Cardiac septum (tissue), 1 donor: ENCODE measurements at regions of chr4 and their contacts with region 1.

Region 1: GRCh38 chr4:159175085-159175988 is 72.5 kb downstream of the RAPGEF2 start:
- DNase-seq: no peak

Region 2: DNA sequence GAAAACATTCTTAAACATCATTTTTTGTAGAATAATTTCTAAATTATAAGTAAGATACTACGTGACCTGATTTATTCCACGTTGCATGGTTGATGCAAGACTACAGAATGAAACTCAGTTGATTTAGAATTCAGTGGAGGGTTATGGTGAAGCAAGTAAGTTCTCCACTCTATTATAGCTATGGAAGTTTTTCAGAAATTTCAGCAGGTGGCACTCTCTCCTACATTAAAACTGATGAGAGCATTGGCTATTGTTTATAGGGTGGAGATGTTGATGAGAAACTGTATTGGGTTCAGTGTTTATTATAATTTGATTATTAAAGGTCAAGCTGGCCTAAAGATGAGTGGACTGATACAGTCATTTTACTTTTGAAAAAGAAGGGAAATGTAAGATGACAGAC is 318.5 kb before region 1 on chr4:
- intact Hi-C with region 1: loop called (anchors 2 kb)
- DNase-seq: no peak

Region 3: GRCh38 chr4:159096434-159096833 is 78.9 kb before region 1 on chr4:
- intact Hi-C with region 1: no loop called
- DNase-seq: no peak